ENCODE measurements at regions of chr20 and their contacts with region 1.

Region 1: GRCh38 chr20:32888636-32889035 is 29.9 kb downstream of the EFCAB8 start:
- DNase-seq: no peak
- H3K4me3 ChIP-seq: no peak overlapping the region
- H3K27ac ChIP-seq: no peak overlapping the region
- H3K4me1 ChIP-seq: no peaks in the 10 kb centered on the region
- H3K27me3 ChIP-seq: no peaks in the 10 kb centered on the region
- CTCF ChIP-seq: no peak
- EP300 ChIP-seq: no peak
- POLR2A ChIP-seq: no peak

Region 2: GRCh38 chr20:32559753-32560380 is 328.8 kb before region 1 on chr20:
- intact Hi-C with region 1: loop called in 1 of 4 experiments (anchors 5 kb)
- DNase-seq: no peak
- H3K4me3 ChIP-seq: no peak overlapping the region
- H3K27ac ChIP-seq: no peak overlapping the region
- H3K4me1 ChIP-seq: no peaks in the 10 kb centered on the region
- H3K27me3 ChIP-seq: no peaks in the 10 kb centered on the region
- CTCF ChIP-seq: no peak
- EP300 ChIP-seq: no peak
- POLR2A ChIP-seq: no peak

Region 3: DNA sequence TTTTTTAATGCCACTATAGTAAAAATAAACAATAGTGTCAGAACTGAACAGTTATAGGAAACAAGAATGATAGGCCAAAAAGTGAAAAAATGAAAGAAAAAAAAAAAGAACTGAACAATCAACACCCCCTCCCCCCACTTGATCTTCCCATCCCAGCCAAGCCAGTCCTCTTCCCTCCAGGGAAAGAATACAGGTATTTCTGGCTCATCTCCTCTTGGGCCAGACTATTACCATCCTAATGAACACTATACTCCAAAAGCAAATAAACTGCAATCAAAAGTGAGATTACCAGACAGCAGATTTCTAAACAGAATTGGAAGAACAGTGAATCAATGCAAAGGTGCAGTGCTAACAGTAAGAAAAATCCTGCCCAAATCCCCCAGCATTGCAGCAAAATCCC is 193.5 kb before region 1 on chr20:
- intact Hi-C with region 1: no loop called
- DNase-seq: no peak
- H3K4me3 ChIP-seq: no peak overlapping the region
- H3K27ac ChIP-seq: no peak overlapping the region
- H3K4me1 ChIP-seq: no peaks in the 10 kb centered on the region
- H3K27me3 ChIP-seq: no peaks in the 10 kb centered on the region
- CTCF ChIP-seq: no peak
- EP300 ChIP-seq: no peak
- POLR2A ChIP-seq: no peak